ENCODE measurements at regions of chr2 and their contacts with region 1.

Region 1: GRCh38 chr2:218736531-218736930 is 25.9 kb downstream of the TTLL4 start:
- DNase-seq: no peak
- H3K4me3 ChIP-seq: no peak overlapping the region
- CTCF ChIP-seq: no peak

Region 2: DNA sequence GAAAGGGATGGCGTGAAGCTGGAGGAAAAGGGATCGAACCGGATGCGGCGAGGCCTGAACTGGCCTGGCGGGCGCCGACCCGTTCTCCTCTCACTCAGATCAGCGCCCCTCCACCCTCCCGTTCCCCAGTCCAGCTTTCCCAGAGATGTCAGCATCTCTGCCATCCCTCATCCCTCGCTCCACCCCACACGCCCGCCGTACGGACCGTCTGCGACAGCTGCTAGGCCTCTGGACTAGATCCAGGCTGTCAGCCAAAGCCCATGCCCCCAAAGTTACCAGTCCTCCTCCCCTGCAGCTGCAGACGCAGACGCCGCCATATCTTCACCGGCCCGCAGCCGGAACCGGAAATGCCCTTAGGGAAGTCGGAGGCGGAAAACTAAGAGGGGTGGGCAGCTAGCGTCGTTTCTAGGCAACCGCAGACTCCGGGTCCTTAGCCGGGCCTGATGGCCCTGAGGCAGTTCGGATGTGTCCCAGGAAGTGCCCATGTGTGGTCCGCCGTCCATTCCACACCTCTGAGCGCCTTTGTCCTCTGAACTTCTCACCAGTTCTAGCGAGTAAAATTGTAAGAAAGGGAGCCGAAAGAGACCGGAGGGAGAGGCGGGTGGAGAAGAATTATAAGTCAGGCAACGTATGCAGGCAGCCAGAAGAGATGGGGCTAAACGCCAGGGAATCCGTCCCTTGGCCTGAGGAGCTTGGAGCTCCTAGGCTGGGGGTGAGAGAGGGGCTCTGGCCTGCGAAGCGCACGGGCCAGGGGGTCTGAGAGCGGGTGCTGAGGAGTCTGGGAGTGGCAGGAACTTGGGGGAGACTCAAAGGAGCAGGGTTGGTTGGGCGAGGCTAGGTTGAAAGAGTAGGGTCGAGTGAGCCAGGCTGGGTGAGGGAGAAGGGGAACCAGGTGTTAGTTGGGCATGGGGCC is 64.6 kb before region 1 on chr2 and contains the starts of genes RNF25 and STK36:
- in situ Hi-C with region 1: loop called (anchors 5 kb)
- DNase-seq: peak; percentile 75
- H3K4me3 ChIP-seq: peak within 1 kb of the TSS; percentile 84
- CTCF ChIP-seq: no peak

Region 3: DNA sequence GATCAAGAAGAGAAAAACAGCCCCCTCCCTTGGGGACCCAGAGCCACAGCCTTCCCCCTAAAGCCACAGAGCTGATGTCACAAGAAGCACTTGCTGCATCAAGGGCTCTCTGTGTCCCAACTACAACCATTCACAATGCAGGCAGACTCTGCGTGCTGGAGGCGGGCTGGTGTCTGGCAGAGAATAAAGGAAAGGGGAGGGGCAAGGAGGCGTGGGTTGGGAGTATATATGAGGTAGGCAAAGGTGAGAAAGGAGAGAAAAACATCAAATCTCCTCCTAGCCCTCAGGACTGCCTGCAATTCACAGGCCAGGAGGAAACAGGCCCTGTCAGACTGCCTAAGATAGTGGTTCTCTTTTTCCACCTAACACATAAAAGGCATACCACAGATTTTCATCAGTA is 372.9 kb after region 1 on chr2:
- in situ Hi-C with region 1: no loop called
- DNase-seq: no peak
- H3K4me3 ChIP-seq: no peak overlapping the region
- CTCF ChIP-seq: no peak

Measured in astrocyte of the cerebellum (primary cell).